Left ventricle myocardium inferior (tissue), 1 donor: ENCODE measurements at regions of chr17 and their contacts with region 1.

Region 1: GRCh38 chr17:46044286-46044928 is 45.4 kb downstream of the STH start:
- DNase-seq: no peak
- H3K4me3 ChIP-seq: no peak overlapping the region
- H3K27ac ChIP-seq: peak overlapping the region; percentile 47
- H3K4me1 ChIP-seq: peaks cover 55% of the 10 kb centered on the region
- H3K27me3 ChIP-seq: no peaks in the 10 kb centered on the region
- CTCF ChIP-seq: peak; percentile 89

Region 2: GRCh38 chr17:46194393-46195216 is 150.2 kb after region 1 on chr17:
- intact Hi-C with region 1: loop called (anchors 5 kb)
- DNase-seq: no peak
- H3K4me3 ChIP-seq: peak overlapping the region; percentile 95
- H3K27ac ChIP-seq: peak overlapping the region; percentile 100
- H3K4me1 ChIP-seq: peaks cover 66% of the 10 kb centered on the region
- H3K27me3 ChIP-seq: no peaks in the 10 kb centered on the region
- CTCF ChIP-seq: peak; percentile 44

Region 3: DNA sequence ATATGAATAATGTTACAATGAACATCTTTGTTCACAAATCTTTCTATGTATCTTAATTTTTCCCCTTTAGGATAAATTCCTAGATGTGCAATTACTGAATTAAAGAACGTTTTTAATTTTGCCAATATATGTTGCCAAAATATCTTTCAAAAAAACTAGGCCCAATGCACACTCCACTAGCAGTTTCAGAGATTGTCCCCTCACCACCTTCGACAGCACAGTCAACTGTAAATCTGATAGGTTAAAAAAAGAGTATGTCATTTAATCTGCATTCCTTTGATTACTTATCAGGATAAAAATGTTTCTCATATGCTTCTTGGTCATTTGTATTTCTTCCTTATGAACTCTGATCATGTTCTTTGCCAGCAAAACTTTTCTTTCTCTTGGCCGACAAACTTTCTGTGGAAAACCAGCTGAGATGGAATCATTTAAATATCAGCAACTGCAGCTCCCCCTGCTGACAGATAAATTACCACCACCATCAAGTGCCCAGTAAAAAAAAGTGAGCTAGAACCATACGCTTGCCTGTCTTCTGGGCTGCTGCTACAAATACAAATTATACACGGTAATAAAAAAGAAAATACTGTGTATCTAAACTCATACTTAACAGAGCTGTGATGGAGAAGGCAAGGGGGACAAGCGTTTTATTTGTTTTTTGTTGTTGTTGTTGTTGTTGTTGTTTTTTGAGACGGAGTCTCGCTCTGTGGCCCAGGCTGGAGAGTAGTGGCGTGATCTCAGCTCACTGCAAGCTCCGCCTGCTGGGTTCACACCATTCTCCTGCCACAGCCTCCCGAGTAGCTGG is 168.4 kb after region 1 on chr17:
- intact Hi-C with region 1: loop called (anchors 5 kb)
- DNase-seq: no peak
- H3K4me3 ChIP-seq: no peak overlapping the region
- H3K27ac ChIP-seq: peak overlapping the region; percentile 44
- H3K4me1 ChIP-seq: peaks cover 28% of the 10 kb centered on the region
- H3K27me3 ChIP-seq: no peaks in the 10 kb centered on the region
- CTCF ChIP-seq: peak; percentile 81